ENCODE measurements at regions of chr18 and their contacts with region 1.

Region 1: GRCh38 chr18:79068937-79069791 is at the start of gene ATP9B:
- DNase-seq: peak; percentile 100
- total RNA-seq, gene ATP9B: 28.3 to 32.9 TPM

Region 2: GRCh38 chr18:78776706-78777285 is 292.4 kb before region 1 on chr18:
- intact Hi-C with region 1: no loop called
- DNase-seq: peak; percentile 42

Region 3: GRCh38 chr18:79217979-79218604 is 148.9 kb after region 1 on chr18:
- intact Hi-C with region 1: no loop called
- DNase-seq: no peak

Region 4: GRCh38 chr18:79575891-79576685 is 506.9 kb after region 1 on chr18:
- intact Hi-C with region 1: no loop called
- DNase-seq: peak; percentile 60

Region 5: DNA sequence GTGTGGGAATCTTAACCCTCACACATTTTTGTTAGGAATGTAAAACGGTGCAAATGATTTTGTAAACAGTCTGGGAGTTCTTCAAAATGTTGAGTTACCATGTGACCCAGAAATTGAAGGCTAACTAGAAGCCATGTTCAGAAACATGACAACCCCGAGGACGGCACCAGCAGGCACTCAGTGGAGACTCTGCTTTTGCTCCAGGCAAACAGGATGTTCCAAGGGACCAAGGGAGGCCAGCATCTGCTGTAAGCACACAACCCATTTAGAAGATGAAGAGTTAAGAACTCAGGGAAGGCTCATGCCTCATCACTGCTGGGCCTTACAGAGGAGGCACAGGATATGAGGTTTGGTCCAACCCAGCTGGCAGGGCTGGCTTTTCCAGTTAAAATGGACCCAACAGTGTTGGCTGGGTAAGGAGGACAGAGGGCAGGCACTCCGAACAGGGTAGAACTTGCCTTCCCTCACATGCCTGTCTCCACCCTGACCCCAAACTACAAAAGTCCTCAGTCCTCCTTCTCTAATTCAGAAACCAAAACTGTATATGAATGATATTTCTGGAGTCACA is 1154.5 kb after region 1 on chr18:
- intact Hi-C with region 1: loop called in 1 of 2 experiments (anchors 5 kb)
- DNase-seq: no peak